Activated T-helper 1 cell treated with anti-CD3 and anti-CD28 coated beads, Interleukin-12 subunit alpha, Interleukin-12 subunit beta, Interleukin-2, Interleukin-4 antibody, amounts not matched to agents 30 ng/mL and 10 ng/mL and 1 ng/mL, durations not matched to agents 14 hours and 24 hours and 36 hours (primary cell): ENCODE measurements at regions of chr1 and their contacts with region 1.

Region 1: GRCh38 chr1:207336559-207337467 is 15.3 kb downstream of the CD55 start:
- DNase-seq: peak; percentile 65
- H3K4me3 Mint-ChIP-seq: peak overlapping the region; percentile 44
- H3K27ac Mint-ChIP-seq: peak overlapping the region; percentile 89
- H3K4me1 Mint-ChIP-seq: peaks cover 73% of the 10 kb centered on the region
- H3K27me3 Mint-ChIP-seq: peaks cover 2% of the 10 kb centered on the region

Region 2: DNA sequence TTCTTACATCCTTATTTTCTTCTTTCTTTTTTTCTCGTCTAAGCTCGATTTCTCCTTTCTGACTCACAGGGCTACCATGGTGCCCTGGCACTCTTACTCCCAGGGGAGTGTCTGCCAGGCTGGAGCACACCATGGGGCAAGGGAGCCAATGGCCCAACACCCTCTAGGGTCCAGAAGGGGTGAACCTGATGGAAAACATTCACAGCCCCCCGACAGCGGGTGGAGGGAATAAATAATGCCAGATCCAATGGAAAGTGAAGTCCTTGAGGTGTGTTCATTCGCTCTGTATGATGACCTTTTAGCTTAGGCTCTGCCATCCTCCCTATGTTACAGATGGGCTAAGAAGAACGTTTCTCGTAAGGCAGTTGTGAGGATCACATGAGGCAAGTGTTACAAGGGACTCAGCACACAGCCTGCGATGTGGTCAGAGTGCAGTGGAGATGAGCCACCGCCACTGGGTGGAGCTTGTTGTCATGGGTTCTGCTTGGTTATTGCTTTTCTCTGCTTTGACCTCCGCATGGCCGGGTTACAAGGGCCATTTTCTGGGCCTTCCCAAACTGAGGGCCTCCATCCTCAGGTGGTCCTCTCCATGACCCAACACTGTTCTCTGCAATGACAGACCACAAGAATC is 411.6 kb before region 1 on chr1:
- intact Hi-C with region 1: loop called (anchors 5 kb)
- DNase-seq: peak; percentile 36
- H3K4me3 Mint-ChIP-seq: no peak overlapping the region
- H3K27ac Mint-ChIP-seq: no peak overlapping the region
- H3K4me1 Mint-ChIP-seq: peaks cover 13% of the 10 kb centered on the region
- H3K27me3 Mint-ChIP-seq: no peaks in the 10 kb centered on the region

Region 3: GRCh38 chr1:207084701-207085180 is 252.1 kb before region 1 on chr1:
- intact Hi-C with region 1: loop called (anchors 1 kb)
- DNase-seq: peak; percentile 50
- H3K4me3 Mint-ChIP-seq: no peak overlapping the region
- H3K27ac Mint-ChIP-seq: peak overlapping the region; percentile 5
- H3K4me1 Mint-ChIP-seq: peaks cover 39% of the 10 kb centered on the region
- H3K27me3 Mint-ChIP-seq: peaks cover 12% of the 10 kb centered on the region

Region 4: GRCh38 chr1:207188901-207189300 is 147.9 kb before region 1 on chr1:
- intact Hi-C with region 1: no loop called
- DNase-seq: no peak
- H3K4me3 Mint-ChIP-seq: no peak overlapping the region
- H3K27ac Mint-ChIP-seq: no peak overlapping the region
- H3K4me1 Mint-ChIP-seq: no peaks in the 10 kb centered on the region
- H3K27me3 Mint-ChIP-seq: peaks cover 5% of the 10 kb centered on the region

Region 5: GRCh38 chr1:207355060-207355459 is 18.2 kb after region 1 on chr1:
- intact Hi-C with region 1: loop called (anchors 2 kb)
- DNase-seq: no peak
- H3K4me3 Mint-ChIP-seq: no peak overlapping the region
- H3K27ac Mint-ChIP-seq: no peak overlapping the region
- H3K4me1 Mint-ChIP-seq: peaks cover 40% of the 10 kb centered on the region
- H3K27me3 Mint-ChIP-seq: no peaks in the 10 kb centered on the region

Region 6: GRCh38 chr1:207389740-207390464 is 53.1 kb after region 1 on chr1:
- intact Hi-C with region 1: loop called (anchors 1 kb)
- DNase-seq: no peak
- H3K4me3 Mint-ChIP-seq: no peak overlapping the region
- H3K27ac Mint-ChIP-seq: peak overlapping the region; percentile 81
- H3K4me1 Mint-ChIP-seq: peaks cover 7% of the 10 kb centered on the region
- H3K27me3 Mint-ChIP-seq: no peaks in the 10 kb centered on the region

Region 7: DNA sequence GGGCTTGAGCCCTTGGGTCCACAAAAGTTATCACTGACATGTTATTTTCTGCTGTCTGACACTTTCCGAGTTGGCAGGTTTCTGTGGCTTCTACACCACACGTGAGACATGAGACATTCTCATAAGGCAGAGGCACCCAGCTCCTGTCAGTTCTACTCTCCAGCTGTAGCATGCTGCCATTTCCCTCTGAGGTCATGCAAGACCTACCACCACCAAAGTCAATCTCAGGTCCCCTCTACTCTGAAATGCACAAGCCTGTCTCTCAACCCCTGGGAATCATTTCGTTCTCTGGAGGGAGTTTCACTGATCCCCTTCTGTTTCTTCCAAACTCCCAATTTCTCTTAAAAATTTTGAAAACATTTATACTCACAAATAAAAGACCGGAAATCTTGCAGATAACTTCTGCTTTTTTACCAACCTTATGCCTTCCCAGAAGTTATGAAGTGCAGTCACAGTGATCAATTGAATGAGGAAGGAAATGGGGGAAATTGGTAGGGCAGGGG is 77.8 kb after region 1 on chr1:
- intact Hi-C with region 1: loop called (anchors 1 kb)
- DNase-seq: no peak
- H3K4me3 Mint-ChIP-seq: no peak overlapping the region
- H3K27ac Mint-ChIP-seq: peak overlapping the region; percentile 35
- H3K4me1 Mint-ChIP-seq: peaks cover 33% of the 10 kb centered on the region
- H3K27me3 Mint-ChIP-seq: peaks cover 4% of the 10 kb centered on the region